Posterior vena cava (tissue), 2 donors: ENCODE measurements at regions of chr10 and their contacts with region 1.

Region 1: DNA sequence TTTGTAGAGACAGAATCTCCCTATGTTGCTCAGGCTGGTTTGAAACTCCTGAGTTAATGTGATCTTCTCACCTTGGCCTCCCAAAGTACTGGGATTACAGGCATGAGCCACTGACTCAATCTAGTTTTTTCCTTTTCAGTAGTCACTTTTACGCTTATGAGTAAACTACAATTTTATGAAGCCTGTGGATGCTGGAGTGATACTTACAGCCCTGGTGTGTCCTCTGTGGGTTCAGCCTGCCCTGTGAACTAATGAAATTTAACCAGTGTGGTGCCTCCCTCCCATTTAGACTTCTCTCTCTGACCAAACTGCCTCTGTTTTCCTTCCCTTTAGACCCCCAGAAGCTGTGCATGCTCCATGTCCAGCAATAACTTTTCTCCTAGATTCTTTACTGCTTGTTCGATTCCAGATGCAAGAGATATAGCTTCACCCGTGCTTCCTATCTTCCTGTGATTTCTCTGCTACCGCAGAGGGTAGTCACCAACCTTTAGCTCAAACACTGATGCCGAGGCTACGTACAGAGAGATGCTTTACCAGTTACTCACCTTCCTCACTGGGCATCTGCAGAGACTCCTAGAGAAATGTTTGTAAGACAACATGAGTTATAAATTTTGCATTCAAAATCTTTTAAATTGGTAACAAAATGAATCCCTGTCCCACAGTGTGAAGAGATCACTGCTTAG is 90.8 kb downstream of the KIAA1217 start:
- DNase-seq: no peak

Region 2: GRCh38 chr10:22573820-22574569 is 1725.7 kb before region 1 on chr10:
- intact Hi-C with region 1: loop called in 1 of 2 experiments (anchors 10 kb)
- DNase-seq: no peak

Region 3: GRCh38 chr10:22714479-22715289 is 1585.0 kb before region 1 on chr10 and contains the start of gene PIP4K2A:
- intact Hi-C with region 1: no loop called
- DNase-seq: peak; percentile 91
- total RNA-seq, gene PIP4K2A: 64.6 to 77.6 TPM

Region 4: GRCh38 chr10:23850631-23851030 is 449.1 kb before region 1 on chr10:
- intact Hi-C with region 1: no loop called
- DNase-seq: no peak

Region 5: GRCh38 chr10:24382979-24383663 is 83.4 kb after region 1 on chr10:
- intact Hi-C with region 1: no loop called
- DNase-seq: no peak

Region 6: DNA sequence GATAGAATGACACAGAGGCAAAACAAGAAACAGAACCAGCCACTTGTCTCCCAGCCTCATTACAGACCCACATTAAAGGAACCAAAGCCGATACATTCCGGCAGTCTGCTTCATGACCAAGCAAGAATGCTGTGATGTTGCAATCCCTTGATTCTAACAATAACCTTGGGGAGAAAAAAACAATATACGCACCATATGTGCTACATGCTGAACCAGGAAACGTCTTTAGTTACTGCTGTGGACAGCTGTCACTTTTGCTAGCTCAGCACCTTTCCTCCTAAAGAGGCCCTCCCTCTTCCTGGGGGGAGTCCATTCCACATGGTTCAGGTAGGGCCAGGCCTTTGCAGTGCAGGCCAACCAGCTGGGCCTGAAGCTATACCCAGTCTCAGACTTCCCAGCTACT is 573.6 kb after region 1 on chr10:
- intact Hi-C with region 1: no loop called
- DNase-seq: no peak